ENCODE measurements at regions of chr6 and their contacts with region 1.

Region 1: DNA sequence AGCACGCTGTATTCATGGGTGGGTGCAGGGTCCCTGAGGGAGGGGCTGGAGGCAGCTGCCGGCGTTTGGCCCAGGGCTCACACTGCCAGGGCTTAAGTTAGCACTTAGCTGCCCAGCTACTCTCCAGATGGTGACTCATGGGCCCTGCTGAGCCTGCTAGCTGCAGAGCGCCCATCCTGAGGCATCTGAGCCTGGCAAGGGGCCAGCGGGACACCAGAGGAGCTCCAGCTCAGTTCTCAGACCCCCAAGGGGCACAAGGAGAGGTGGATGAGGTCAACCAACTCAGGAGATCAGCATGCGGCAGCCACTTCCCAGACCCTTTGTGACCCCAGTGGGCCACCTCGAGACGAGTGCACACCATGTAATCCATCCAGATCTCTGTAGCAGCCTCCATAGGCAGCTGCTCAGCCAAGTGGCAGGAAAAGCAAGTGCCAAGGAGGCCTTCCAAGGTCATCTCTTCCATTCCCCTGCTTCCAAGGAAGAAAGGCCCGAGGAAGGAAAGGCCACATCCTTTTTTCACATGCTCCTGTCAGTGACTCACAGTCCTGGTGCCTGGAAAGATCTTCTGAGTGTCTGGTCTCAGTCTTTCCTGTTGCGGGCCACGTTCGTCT is 35.3 kb downstream of the FOXP4 start:
- DNase-seq: no peak
- ATAC-seq: no peak
- H3K4me3 ChIP-seq: no peak overlapping the region
- H3K27ac ChIP-seq: no peak overlapping the region
- H3K4me1 ChIP-seq: peaks cover 86% of the 10 kb centered on the region
- H3K27me3 ChIP-seq: no peaks in the 10 kb centered on the region
- CTCF ChIP-seq: no peak
- EP300 ChIP-seq: no peak
- POLR2A ChIP-seq: no peak
- RAD21 ChIP-seq: no peak

Region 2: DNA sequence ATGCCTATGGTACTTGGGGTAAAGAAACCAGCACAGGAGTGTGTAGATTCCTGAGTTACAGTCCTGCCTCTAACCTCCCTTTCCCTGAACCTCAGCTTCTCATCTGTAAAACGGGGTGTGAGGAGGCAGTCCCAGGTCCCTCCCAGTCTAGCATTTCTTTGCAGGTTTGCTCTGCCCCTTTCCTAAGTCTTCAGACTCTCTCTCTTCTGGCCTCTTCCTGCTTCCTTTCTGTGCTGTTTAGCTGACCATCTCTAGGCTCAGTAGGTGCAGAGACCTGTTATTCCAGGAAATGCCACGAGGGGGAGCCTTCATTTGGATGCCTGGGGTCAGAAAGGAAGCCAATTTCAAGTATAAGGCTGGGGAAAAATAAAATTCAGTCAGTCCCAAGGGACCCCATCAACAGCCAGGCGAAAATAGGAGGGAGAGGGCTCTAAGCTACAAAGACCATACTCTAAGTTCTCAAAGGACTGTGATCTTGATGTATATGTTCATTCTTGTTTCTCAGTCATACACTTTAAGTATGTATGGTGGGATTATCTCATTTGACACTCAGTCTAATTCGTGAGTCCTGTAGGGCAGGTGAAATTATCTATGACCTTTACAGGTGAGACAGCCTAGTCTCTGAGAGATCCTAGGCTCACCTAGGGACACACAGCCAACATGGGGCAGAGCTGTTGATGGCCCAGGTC is 157.0 kb before region 1 on chr6:
- CTCF ChIA-PET with region 1: no interaction called
- POLR2A ChIA-PET with region 1: interaction called, 6 read pairs
- in situ Hi-C with region 1: no loop called
- intact Hi-C with region 1: loop called (anchors 1 kb)
- DNase-seq: peak; percentile 70
- ATAC-seq: peak; percentile 57
- H3K4me3 ChIP-seq: no peak overlapping the region
- H3K27ac ChIP-seq: no peak overlapping the region
- H3K4me1 ChIP-seq: peaks cover 40% of the 10 kb centered on the region
- H3K27me3 ChIP-seq: peaks cover 3 to 53% of the 10 kb centered on the region in 2 experiments; a peak in 4 of 5 replicates
- CTCF ChIP-seq: peak; percentile 92
- EP300 ChIP-seq: no peak
- POLR2A ChIP-seq: no peak
- RAD21 ChIP-seq: peak; percentile 42; the same call in 1 of the 2 replicates

Region 3: GRCh38 chr6:41497994-41498393 is 83.5 kb before region 1 on chr6:
- CTCF ChIA-PET with region 1: no interaction called
- POLR2A ChIA-PET with region 1: interaction called, 10 read pairs
- in situ Hi-C with region 1: no loop called
- intact Hi-C with region 1: no loop called
- DNase-seq: no peak
- ATAC-seq: no peak
- H3K4me3 ChIP-seq: no peak overlapping the region
- H3K27ac ChIP-seq: no peak overlapping the region
- H3K4me1 ChIP-seq: peaks cover 88% of the 10 kb centered on the region
- H3K27me3 ChIP-seq: no peaks in the 10 kb centered on the region; a peak in 1 of 5 replicates
- CTCF ChIP-seq: no peak
- EP300 ChIP-seq: no peak
- POLR2A ChIP-seq: no peak
- RAD21 ChIP-seq: no peak

Region 4: GRCh38 chr6:41527721-41528590 is 53.5 kb before region 1 on chr6:
- CTCF ChIA-PET with region 1: no interaction called
- POLR2A ChIA-PET with region 1: interaction called, 11 read pairs
- in situ Hi-C with region 1: no loop called
- intact Hi-C with region 1: no loop called
- DNase-seq: peak; percentile 41
- ATAC-seq: peak; percentile 22
- H3K4me3 ChIP-seq: peak overlapping the region; percentile 23 to 49 (median 25); a peak in 2 of 6 replicates
- H3K27ac ChIP-seq: peak overlapping the region; percentile 18
- H3K4me1 ChIP-seq: peaks cover 70% of the 10 kb centered on the region
- H3K27me3 ChIP-seq: no peaks in the 10 kb centered on the region
- CTCF ChIP-seq: no peak
- EP300 ChIP-seq: no peak
- POLR2A ChIP-seq: no peak
- RAD21 ChIP-seq: no peak

Region 5: DNA sequence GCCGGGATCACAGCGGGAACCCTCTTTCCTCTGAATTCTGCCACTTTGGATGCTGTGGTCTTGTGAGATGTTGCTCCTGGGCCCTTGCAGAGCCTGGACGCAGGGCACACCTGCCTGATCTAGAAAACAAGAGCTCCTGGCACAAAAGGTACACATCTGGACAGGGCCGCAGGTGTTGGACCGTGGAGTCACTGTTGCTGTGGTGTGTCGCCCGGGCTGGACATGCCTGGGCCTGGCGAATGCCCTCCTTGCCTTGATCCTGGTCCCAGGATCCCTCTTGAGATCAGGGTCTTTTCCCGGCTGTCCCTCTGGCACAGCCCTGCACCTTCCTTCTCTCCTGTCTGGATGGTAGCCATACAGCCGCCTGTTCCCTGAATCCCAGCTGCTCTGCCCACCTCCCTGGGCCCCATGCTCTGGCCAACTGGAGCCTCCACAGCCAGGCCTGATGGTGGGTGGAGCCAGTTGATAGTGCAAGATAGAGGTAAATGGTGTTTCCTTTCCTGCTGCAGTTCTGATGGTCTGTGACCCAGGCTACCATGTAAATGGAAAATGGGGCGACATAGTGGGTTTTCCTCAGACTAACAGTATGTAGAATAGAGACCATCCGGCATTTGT is 30.3 kb before region 1 on chr6:
- CTCF ChIA-PET with region 1: no interaction called
- POLR2A ChIA-PET with region 1: interaction called, 23 read pairs
- in situ Hi-C with region 1: no loop called
- intact Hi-C with region 1: no loop called
- DNase-seq: no peak
- ATAC-seq: no peak
- H3K4me3 ChIP-seq: no peak overlapping the region; a peak in 1 of 6 replicates
- H3K27ac ChIP-seq: no peak overlapping the region
- H3K4me1 ChIP-seq: peaks cover 72% of the 10 kb centered on the region
- H3K27me3 ChIP-seq: no peaks in the 10 kb centered on the region
- CTCF ChIP-seq: no peak
- EP300 ChIP-seq: no peak
- POLR2A ChIP-seq: no peak
- RAD21 ChIP-seq: no peak

Region 6: GRCh38 chr6:41672821-41673703 is 91.6 kb after region 1 on chr6:
- CTCF ChIA-PET with region 1: no interaction called
- POLR2A ChIA-PET with region 1: no interaction called
- in situ Hi-C with region 1: no loop called
- intact Hi-C with region 1: no loop called
- DNase-seq: no peak
- ATAC-seq: peak; percentile 19; the same call in 1 of the 3 replicates
- H3K4me3 ChIP-seq: no peak overlapping the region
- H3K27ac ChIP-seq: no peak overlapping the region
- H3K4me1 ChIP-seq: peaks cover 2% of the 10 kb centered on the region
- H3K27me3 ChIP-seq: peaks cover 8 to 67% of the 10 kb centered on the region in 2 experiments
- CTCF ChIP-seq: no peak
- EP300 ChIP-seq: no peak
- POLR2A ChIP-seq: no peak
- RAD21 ChIP-seq: no peak